Left cardiac atrium (tissue), 4 donors: ENCODE measurements at regions of chr1 and their contacts with region 1.

Region 1: GRCh38 chr1:41416552-41417334 is 55.5 kb downstream of the FOXO6 start:
- DNase-seq: peak; percentile 68
- ATAC-seq: peak; percentile 61 to 69

Region 2: DNA sequence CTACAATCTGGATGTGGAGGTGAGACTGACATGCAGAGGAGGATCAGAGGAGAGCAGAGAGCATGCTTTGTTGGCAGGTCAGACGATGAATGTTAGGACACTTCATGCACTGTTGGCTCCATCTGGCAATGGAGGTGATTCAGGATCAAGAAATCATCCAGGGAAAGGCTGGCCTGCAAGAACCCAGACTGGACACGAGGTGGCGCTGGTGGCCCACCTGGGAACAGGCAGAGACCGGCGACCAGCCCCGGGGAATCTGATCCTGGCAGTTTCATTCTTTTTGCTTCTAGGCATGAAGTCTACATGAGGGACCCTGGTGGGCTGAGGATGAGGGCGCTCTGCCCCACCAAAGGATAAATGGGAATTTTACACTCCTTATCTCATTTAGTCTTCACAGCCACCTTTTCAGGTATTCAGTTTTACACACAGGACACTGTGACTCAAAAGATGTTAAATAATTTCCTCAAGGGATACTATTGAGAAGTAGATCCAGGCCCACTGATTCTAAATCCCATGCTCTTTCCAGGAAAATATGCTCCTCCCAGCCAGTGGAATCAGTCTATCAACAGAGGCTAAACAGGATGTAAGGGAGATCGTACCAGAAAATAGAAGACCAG is 148.5 kb before region 1 on chr1:
- intact Hi-C with region 1: loop called (anchors 2 to 5 kb)
- DNase-seq: peak; percentile 78
- ATAC-seq: peak; percentile 78 to 90

Region 3: GRCh38 chr1:41282679-41283317 is 133.9 kb before region 1 on chr1:
- intact Hi-C with region 1: loop called in 1 of 2 experiments (anchors 5 kb)
- DNase-seq: peak; percentile 38
- ATAC-seq: peak; percentile 57 to 81

Region 4: DNA sequence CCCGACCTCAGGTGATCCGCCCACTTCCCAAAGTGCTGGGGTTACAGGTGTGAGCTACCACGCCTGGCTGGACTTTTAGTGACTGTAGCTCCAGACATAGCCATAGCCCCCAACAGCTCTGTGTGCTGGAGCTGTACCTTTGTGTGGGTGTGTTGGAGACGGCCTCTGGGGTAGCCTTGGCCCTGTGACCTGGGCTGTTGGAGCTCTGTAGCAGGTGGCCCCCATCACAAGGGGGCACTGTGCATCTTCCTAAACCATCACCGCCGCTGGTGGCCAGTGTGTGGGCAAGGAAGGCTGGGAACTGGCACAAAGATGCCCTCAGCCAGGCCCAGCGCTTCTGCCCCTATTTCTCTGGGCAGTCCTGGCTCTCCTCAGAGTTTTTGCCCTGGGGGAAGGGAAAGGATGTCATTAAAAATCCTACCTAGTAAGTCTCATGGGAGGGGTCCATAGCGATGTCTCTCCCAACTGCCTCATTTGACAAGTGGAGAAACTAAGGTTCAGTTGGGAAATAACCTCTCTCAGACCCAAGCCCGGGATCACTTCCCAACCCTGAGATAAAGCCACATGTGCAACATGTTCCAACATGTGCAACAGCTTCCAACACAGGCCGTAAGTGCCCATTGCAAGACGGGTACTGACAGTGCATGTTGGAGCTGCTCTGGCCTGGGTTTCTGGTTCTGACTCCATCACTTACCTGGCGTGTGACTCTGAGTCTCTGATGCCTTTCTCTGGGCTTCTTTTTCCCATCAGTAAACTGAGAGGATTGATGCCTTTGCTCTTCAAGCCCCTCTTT is 93.7 kb before region 1 on chr1:
- intact Hi-C with region 1: loop called (anchors 2 kb)
- DNase-seq: no peak
- ATAC-seq: peak; percentile 51 to 62